ENCODE measurements at regions of chr10 and their contacts with region 1.

Region 1: DNA sequence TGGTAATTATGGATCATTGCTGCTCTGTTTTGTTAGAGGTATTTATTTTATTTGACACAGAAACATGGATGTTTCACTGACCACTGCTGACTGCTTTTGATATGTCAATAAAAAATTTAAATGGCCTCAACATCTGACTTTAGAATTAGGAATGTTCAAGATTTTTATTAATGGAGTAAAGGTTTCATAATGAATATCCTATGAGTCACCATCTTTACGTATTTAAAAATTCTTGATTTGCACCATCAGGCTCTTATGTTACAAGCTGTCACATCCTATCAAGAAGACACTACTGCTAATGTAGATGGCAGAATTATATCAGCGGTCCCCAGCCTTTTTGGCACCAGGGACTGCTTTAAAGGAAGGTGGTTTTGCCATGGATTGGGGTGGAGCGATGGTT is 578.7 kb upstream of the NRP1 start:
- DNase-seq: peak; percentile 94
- ATAC-seq: peak; percentile 92
- H3K4me3 ChIP-seq: no peak overlapping the region
- H3K27ac ChIP-seq: peak overlapping the region; percentile 0; the same call in 1 of the 2 replicates
- H3K4me1 ChIP-seq: peaks cover 14% of the 10 kb centered on the region
- H3K27me3 ChIP-seq: no peaks in the 10 kb centered on the region
- CTCF ChIP-seq: no peak

Region 2: DNA sequence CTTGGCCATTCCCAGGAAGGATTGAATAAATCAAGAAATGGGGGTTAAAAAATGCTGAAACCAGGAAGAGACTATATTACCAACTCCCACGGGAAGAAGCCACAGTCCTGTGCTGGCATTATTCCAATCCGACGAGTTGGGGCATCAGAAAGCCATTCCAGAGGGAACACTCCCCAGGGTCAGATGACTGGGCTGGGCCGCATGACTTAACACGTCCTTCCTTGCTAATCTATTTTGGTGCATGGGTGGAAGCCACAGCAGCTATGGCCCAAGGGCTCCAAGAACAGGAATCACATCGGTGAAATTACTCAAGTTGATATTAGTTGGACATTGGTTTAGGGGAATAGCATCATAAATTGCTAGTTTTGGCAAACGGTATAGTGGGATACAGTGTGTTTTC is 14.2 kb after region 1 on chr10:
- CTCF ChIA-PET with region 1: interaction called, 3 read pairs
- POLR2A ChIA-PET with region 1: no interaction called
- intact Hi-C with region 1: loop called (anchors 1 kb)
- DNase-seq: no peak
- ATAC-seq: no peak
- H3K4me3 ChIP-seq: no peak overlapping the region
- H3K27ac ChIP-seq: no peak overlapping the region
- H3K4me1 ChIP-seq: no peaks in the 10 kb centered on the region
- H3K27me3 ChIP-seq: no peaks in the 10 kb centered on the region
- CTCF ChIP-seq: no peak